A673 (cell line): ENCODE measurements at regions of chr15 and their contacts with region 1.

Region 1: DNA sequence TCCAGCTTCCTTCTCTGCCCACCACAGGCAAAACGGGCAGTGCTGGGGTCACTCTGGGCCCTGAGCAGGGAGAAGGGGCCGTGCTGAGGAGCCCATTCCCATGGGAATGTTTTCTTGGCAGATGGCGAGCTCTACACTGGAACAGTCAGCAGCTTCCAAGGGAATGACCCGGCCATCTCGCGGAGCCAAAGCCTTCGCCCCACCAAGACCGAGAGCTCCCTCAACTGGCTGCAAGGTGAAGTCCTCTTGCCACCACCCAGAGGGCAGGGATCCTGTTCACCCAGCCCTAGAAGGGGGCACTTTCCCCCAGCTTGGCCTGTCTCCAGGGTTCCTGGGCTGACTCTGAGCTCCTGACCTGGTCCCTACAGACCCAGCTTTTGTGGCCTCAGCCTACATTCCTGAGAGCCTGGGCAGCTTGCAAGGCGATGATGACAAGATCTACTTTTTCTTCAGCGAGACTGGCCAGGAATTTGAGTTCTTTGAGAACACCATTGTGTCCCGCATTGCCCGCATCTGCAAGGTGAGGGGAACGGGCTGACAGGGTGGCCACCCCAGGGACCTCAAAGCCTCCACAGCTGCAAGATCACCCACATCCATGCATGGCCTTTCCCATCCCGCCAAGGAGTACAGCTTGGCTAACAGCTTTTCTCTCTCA is 12.4 kb downstream of the CIB1 start:
- DNase-seq: peak; percentile 67
- H3K4me3 ChIP-seq: no peak overlapping the region
- H3K27ac ChIP-seq: no peak overlapping the region
- H3K4me1 ChIP-seq: no peaks in the 10 kb centered on the region
- H3K27me3 ChIP-seq: no peaks in the 10 kb centered on the region
- CTCF ChIP-seq: peak; percentile 62

Region 2: GRCh38 chr15:89714775-89715174 is 506.6 kb before region 1 on chr15:
- CTCF ChIA-PET with region 1: no interaction called
- POLR2A ChIA-PET with region 1: interaction called, 22 read pairs
- intact Hi-C with region 1: no loop called
- DNase-seq: no peak
- H3K4me3 ChIP-seq: no peak overlapping the region
- H3K27ac ChIP-seq: no peak overlapping the region
- H3K4me1 ChIP-seq: no peaks in the 10 kb centered on the region
- H3K27me3 ChIP-seq: no peaks in the 10 kb centered on the region
- CTCF ChIP-seq: no peak

Region 3: GRCh38 chr15:90154861-90155626 is 66.3 kb before region 1 on chr15:
- CTCF ChIA-PET with region 1: interaction called, 6 read pairs
- POLR2A ChIA-PET with region 1: interaction called, 11 read pairs
- intact Hi-C with region 1: no loop called
- DNase-seq: peak; percentile 35
- H3K4me3 ChIP-seq: no peak overlapping the region
- H3K27ac ChIP-seq: no peak overlapping the region
- H3K4me1 ChIP-seq: peaks cover 6% of the 10 kb centered on the region
- H3K27me3 ChIP-seq: no peaks in the 10 kb centered on the region
- CTCF ChIP-seq: no peak

Region 4: GRCh38 chr15:90249203-90249863 is 28.0 kb after region 1 on chr15 and contains the start of gene TTLL13:
- CTCF ChIA-PET with region 1: interaction called, 11 read pairs
- POLR2A ChIA-PET with region 1: no interaction called
- intact Hi-C with region 1: no loop called
- DNase-seq: peak; percentile 87
- H3K4me3 ChIP-seq: peak within 1 kb of the TSS; percentile 58
- H3K27ac ChIP-seq: no peak within 1 kb of the TSS
- H3K4me1 ChIP-seq: no peaks in the 10 kb centered on the region
- H3K27me3 ChIP-seq: no peaks in the 10 kb centered on the region
- CTCF ChIP-seq: no peak
- total RNA-seq, gene TTLL13: 0.33 TPM in 1 of 2 replicates, not detected in the other